OCI-LY7 (cell line): ENCODE measurements at regions of chr1 and their contacts with region 1.

Region 1: DNA sequence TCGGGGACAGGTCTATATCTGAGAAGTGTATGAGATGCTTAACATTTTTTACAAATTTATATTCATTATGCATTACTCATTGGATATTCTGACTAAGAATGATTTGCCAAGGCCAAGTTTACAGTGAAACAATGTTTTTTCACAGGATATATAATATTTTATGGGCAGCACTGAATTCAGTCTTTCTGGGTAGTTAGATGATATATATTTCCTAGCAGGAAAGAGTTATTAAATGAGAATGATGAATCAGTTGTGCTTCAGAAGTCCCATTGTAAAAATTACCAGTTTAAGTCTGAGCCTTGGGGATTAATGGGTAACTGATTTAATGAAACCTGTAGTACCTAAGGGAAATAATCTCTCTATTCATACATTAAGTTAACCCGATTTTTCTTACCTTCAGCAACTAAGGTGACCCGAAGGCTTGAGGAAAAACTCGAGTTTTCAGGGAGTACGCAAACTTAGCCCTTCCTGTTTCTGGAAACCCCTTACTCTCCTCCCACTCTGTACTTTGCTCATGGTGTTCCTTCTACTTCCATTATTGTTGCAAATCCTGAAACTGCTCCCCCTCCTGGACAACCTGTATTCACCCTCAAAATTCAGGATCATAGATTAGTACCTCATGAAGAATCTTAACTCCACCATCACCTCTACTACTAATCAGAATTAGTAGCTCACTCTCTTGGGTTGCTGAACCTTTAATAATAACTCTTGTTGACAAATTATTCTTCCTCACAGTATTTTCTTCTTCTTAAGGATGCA is 135.1 kb downstream of the AK5 start:
- DNase-seq: peak; percentile 17
- H3K4me3 ChIP-seq: no peak overlapping the region
- H3K27ac ChIP-seq: no peak overlapping the region
- H3K4me1 ChIP-seq: peaks cover 36% of the 10 kb centered on the region
- CTCF ChIP-seq: peak; percentile 75

Region 2: DNA sequence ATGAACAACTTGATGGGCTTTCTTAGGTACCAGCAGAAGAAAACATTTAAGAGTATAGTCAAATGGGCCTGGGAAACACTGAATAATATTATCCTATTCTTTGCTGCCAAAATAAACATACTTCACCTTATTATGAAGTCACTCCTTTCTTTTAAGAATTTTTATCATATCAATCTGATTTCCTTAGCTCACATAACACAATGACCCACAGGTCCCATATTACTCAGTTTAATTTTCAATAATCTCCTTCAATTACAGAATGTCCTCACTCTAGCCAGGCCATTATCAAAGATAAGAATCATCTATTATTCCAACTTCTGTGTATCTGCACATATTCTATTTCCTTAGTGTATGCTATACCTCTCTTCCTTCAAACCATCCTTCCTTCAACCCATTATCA is 260.7 kb before region 1 on chr1:
- CTCF ChIA-PET with region 1: no interaction called
- POLR2A ChIA-PET with region 1: no interaction called
- intact Hi-C with region 1: loop called (anchors 10 kb)
- DNase-seq: no peak
- H3K4me3 ChIP-seq: no peak overlapping the region
- H3K27ac ChIP-seq: no peak overlapping the region
- H3K4me1 ChIP-seq: no peaks in the 10 kb centered on the region
- CTCF ChIP-seq: no peak

Region 3: DNA sequence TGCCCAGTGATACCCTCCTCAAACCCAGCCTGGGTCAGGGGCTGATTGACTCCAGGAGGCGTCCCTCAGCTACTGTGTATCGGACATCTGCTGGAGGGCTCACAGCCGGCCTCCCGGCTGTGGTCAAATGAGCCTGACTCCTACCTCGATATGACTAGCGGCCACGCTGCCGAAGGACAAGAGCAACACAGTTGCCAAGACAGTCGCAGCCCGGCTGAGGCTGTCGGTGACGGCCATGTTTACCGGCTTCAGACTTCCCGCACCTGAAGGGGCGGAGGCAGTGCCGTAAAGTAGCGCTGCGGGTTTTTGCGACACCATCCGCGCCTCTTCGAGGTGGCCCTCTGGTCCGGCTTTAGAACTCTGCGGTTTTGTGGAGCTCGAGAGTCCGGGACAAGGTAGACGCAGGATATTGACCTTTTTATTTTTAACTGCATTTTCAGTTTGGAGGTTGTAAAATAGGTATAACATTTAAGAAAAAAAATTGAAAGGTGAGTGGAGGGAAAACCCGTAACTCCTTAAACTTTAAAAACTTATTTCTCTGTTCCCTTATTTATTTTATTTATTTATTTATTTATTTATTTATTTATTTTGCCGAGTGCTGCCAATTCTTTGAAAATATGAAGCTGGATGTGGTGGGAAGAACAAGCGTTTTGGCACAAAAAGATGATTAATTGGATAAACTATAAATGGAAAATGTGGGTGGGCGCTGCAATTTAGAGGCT is 197.5 kb before region 1 on chr1 and contains the start of gene PIGK:
- CTCF ChIA-PET with region 1: no interaction called
- POLR2A ChIA-PET with region 1: no interaction called
- intact Hi-C with region 1: loop called (anchors 5 kb)
- DNase-seq: peak; percentile 93
- H3K4me3 ChIP-seq: peak within 1 kb of the TSS; percentile 95
- H3K27ac ChIP-seq: peak within 1 kb of the TSS; percentile 57
- H3K4me1 ChIP-seq: peaks cover 7% of the 10 kb centered on the region
- CTCF ChIP-seq: peak; percentile 22; the same call in 1 of the 2 replicates
- total RNA-seq, gene PIGK: 8.6 and 13.3 TPM in 2 replicates

Region 4: DNA sequence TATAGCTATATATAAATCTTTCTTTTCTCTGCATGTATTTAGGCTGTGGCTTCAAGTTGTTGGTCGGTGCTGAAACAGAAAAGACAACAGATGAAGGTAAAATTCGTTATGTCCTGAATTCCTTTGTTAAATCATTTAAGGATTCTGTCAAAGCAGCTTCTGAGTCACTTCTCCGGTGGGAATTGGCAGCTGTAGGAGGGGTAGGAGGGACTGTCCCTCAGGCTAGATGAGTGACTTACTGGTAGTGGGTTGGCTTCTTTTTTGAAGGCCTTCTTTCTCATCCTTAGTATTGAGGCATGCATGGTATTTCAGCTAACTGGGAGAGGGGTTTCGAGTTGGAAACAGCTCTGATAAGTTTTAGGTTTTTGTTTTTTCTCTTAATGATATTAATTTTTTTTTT is 449.4 kb after region 1 on chr1:
- CTCF ChIA-PET with region 1: no interaction called
- POLR2A ChIA-PET with region 1: no interaction called
- intact Hi-C with region 1: no loop called
- DNase-seq: no peak
- H3K4me3 ChIP-seq: no peak overlapping the region
- H3K27ac ChIP-seq: no peak overlapping the region
- H3K4me1 ChIP-seq: no peaks in the 10 kb centered on the region
- CTCF ChIP-seq: no peak